Aorta (tissue), 5 donors: ENCODE measurements at regions of chr2 and their contacts with region 1.

Region 1: GRCh38 chr2:230614913-230615332 is 97.7 kb upstream of the CAB39 start:
- DNase-seq: no peak
- ATAC-seq: no peak
- H3K4me3 ChIP-seq: no peak overlapping the region
- H3K27ac ChIP-seq: no peak overlapping the region
- H3K4me1 ChIP-seq: no peaks in the 10 kb centered on the region
- H3K27me3 ChIP-seq: no peaks in the 10 kb centered on the region

Region 2: DNA sequence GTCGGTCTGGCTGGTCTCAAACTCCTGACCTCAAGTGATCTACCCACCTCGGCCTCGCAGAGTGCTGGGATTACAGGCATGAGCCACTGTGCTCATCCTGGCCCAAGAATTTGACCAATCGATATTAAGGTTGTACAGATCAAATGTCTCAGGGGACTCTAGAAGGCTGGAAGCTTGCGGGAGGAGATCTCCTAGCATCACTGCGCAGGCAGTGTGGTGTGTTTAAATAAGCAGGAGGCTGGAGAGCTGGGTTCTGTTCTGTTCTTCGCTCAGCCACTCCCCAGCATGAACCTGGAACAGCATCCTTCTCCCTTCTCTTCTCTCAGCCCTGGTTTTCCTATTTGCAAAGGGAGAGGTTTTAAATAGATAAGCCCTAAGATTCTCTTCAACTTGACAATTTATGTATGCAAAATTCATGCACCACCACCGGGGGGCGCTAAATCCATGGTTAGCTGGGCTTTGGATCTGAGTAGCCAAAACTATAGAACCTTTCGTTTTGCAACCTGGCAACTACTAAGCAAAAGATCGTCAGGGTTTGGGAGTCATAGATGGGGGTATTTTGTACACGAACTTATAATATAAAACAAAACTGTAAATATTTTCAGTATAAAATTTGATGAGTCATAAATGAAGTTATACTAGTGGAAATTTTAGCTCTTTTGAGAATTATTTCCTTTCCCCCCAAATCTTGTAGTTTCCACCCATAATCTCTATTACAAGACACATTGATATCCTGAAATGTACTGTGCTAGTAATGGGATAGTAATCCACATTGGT is 606.8 kb before region 1 on chr2:
- intact Hi-C with region 1: loop called in 1 of 2 experiments (anchors 2 kb)
- DNase-seq: peak; percentile 81 to 89
- ATAC-seq: peak; percentile 67
- H3K4me3 ChIP-seq: no peak overlapping the region
- H3K27ac ChIP-seq: no peak overlapping the region
- H3K4me1 ChIP-seq: no peaks in the 10 kb centered on the region
- H3K27me3 ChIP-seq: no peaks in the 10 kb centered on the region

Region 3: DNA sequence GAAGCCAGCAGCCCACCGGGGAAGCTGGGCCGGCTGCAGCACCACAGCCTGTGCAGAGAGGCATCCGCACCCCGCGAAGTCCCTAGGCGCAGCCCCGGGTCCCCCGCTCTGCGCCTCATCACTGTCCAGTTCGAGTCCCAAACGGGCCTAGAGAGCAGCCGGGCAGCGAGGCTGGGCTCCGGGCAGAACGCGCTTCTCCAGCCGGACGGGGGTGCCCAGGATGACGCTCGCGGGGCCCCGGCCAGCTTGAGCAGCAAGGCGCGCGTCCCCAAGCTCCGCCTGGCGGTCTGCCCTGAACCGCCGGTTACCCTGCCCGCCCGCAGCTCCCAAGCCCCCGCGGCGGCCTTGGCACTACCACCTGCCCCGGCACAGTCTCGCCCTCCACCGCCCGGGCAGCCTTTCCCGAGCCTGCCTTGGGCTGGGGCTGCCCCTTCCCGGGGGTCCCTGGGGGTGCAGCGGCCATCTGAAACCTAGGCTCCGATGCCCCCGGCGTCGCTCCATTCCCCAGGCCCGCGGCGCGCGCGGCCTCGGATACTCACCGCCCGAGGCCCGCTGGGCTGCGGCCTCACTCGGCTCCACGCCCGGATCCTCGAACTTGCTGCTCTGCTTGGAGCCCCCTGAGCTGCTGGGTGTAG is 546.8 kb before region 1 on chr2:
- intact Hi-C with region 1: loop called in 1 of 2 experiments (anchors 5 kb)
- DNase-seq: peak; percentile 67 to 86
- ATAC-seq: peak; percentile 77
- H3K4me3 ChIP-seq: peak overlapping the region; percentile 14 to 38
- H3K27ac ChIP-seq: no peak overlapping the region
- H3K4me1 ChIP-seq: no peaks in the 10 kb centered on the region
- H3K27me3 ChIP-seq: no peaks in the 10 kb centered on the region

Region 4: GRCh38 chr2:230085201-230085600 is 529.7 kb before region 1 on chr2:
- intact Hi-C with region 1: no loop called
- DNase-seq: no peak
- ATAC-seq: no peak
- H3K4me3 ChIP-seq: no peak overlapping the region
- H3K27ac ChIP-seq: no peak overlapping the region
- H3K4me1 ChIP-seq: no peaks in the 10 kb centered on the region
- H3K27me3 ChIP-seq: peaks cover 0 to 3% of the 10 kb centered on the region in 2 donors

Region 5: DNA sequence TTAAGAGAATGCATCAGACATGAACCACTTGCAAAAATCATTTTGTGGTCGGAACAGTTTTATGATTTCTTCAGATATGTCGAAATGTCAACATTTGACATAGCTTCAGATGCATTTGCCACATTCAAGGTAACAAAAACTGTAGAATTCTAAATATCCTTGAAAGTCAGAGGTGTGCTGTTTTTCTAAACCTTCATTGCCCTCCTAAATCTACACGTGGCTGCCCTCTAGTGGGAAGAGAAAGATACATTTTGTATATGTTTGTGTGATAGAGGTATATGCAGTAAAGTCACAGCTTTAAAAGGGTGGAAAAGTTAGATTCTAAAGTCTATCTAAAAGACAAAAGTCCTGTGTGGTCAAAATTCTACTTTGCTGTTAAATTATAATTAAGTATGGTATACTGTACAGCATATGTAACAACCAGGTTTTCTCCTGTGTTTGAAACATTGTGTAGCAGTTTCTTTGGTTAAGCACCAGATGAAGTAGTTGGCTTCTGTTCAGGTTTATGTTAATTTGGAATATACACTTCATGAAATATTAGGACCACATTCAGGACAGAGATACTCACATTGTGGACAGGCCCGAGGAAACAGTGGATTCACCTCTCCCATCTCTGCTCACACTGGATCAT is 184.0 kb after region 1 on chr2:
- intact Hi-C with region 1: loop called in 1 of 2 experiments (anchors 10 kb)
- DNase-seq: no peak
- ATAC-seq: peak; percentile 65
- H3K4me3 ChIP-seq: no peak overlapping the region
- H3K27ac ChIP-seq: no peak overlapping the region
- H3K4me1 ChIP-seq: peaks cover 0 to 6% of the 10 kb centered on the region in 2 donors
- H3K27me3 ChIP-seq: no peaks in the 10 kb centered on the region